ENCODE measurements at regions of chr15 and their contacts with region 1.

Region 1: DNA sequence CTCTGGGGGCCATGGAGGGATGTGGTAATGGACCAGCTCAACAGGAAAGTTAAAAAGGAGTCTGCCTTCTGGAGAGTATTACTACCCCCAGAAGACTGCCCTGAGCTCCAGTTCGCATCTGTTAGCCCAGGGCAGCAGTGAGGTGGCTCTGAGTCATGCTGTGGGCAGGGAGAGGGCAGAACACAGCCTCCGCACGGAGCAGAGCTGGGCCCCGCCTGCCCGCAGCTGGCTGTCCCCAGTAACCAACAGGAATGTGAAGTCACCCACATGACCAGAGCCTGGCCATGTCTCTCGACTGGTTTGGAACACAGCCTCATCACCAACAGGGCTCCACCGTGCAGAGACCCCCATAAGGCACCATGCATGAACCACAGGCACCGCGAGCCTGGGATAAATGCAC is 62.1 kb downstream of the CYFIP1 start:
- DNase-seq: no peak

Region 2: DNA sequence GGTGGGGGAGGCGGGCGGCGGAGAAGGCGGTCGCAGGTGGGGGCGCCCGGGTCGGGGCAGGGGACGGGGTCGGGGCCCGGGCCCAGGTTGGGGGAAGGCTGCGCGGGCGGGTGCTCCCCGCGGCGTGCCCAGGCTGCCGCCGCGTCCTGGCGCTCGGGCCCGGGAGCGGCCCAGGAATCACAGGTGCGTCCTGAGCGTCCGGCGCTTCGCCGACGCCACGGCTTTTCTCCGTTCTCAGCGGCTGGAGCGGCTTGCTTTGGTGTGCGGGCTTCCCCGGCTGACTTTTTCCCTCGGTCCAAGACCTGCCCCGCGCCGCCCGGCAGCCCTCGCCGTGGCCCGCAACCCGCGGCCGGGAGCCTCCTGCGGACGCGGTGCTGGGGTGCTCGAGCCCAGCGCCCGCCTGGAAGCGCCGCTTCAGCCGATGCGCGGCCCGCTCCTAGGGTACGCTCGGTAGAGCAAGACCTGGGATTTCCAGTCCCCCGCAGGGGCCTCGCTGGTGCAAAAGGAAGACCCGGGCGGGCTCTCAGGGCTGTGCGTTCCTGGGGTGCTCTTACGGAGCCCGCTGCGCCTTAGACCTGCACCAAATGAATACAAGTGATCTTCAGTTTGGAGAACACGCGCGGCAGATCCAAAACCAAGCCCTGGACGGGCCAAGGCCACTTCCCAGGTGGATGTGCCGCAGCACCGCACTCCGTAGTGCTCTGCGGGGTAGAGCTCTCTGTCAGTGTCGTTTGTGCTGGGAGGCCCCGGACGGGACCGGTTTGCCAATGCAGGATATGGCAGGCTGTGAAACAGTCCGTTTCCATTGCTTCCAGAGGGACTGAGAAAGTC is 131.0 kb before region 1 on chr15:
- intact Hi-C with region 1: no loop called
- DNase-seq: no peak

Region 3: GRCh38 chr15:23642413-23643044 is 724.5 kb after region 1 on chr15:
- intact Hi-C with region 1: loop called in 1 of 2 experiments (anchors 5 kb)
- DNase-seq: peak; percentile 79

Measured in posterior vena cava (tissue), 2 donors.